Head of caudate nucleus (tissue), 42 donors: ENCODE measurements at regions of chr11 and their contacts with region 1.

Region 1: DNA sequence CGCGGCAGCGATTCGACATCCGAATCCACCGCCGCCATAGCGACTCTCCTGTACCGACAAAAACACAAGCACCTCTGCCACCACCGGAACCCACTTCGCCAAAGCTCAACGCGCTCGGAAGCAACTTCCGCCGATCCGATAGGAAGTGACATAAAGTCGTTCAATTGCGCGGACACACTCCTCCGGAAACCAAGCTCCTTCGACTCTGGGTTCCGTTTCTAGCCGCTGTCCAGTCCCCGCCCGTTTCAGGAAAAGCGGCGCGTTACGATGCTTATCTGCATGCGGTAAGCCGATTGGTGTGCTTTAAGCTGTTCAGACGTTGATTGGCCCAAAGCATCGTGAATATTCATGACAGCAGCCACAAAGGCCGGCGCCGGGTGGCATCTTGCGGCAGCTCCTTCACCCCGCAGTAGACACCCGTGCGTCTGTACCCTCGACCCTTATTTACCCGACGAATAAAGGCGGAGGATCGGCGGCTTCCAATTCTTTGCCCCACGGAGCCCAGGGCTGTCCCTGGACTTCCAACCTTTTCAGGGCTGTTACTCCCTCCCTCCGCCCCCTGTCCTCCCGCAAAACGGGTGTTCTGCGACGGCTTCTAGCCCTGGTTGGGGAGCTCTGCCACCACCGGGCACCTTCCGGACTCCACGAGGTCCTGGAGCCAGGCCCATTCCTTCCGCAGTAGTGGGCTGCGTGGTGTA is at the start of gene TUT1:
- DNase-seq: peak; percentile 90 to 99 (median 97)

Region 2: DNA sequence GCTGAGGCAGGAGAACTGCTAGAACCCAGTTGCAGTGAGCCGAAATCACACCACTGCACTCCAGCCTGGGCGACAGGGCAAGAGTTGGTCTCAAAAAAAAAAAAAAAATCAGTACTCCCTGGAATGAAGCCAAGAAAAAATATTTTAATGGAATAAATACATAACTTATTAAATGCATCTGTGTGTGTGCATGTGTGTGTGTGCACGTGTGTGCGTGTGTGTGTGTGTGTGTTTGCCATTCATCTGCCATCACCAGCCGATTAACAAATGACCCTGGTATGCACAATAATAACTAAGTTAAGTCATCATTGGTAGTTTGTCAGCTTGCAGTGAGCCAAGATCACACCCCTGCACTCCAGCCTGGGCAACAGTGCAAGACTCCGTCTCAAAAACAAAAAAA is 207.8 kb before region 1 on chr11:
- intact Hi-C with region 1: no loop called
- DNase-seq: peak in 1 of 42 donors; percentile 1

Region 3: DNA sequence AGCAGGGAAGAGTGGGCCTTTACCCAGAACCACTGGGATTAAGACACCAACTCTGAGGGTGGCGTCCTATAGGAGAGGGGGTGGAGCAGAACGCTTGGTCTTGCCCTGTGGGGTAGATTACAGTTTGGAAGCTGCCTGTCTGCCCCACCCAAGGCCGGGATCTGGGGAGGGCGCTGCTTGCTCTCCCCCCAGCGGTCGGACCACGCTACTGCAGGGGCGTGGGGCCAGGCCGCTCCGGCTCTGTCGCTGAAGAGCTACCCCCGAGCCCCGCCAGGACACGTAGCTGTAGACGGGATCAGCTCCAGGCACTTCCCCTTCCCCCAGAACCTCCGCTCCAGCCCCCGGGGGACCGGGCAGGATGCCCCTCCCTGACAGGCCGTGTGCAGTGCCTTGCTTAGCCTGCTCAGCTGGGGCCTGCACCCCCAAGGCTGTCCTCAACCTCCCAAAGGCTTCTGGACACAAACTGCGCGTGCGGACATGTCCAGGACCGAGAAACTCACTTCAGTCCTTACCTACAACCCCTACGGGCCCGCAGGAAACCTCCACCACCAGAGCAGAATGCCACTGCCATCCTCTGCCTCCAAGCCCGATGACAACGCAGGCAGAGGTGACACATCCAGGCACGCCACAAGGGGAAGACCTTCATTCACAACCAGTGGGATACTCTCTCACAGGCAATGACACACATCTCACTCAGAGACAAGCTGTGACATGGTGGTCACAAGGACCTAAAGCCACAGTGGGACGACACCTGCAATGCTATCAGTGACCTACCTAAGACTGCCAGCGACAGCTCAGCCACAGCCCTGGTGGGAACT is 48.6 kb before region 1 on chr11:
- intact Hi-C with region 1: no loop called
- DNase-seq: peak in 40 of 42 donors; percentile 33 to 87 (median 68)

Region 4: GRCh38 chr11:62678770-62679696 is 87.4 kb after region 1 on chr11 and contains the start of gene UBXN1:
- intact Hi-C with region 1: loop called (anchors 5 kb)
- DNase-seq: peak; percentile 78 to 97 (median 90)

Region 5: GRCh38 chr11:62831520-62832335 is 240.1 kb after region 1 on chr11 and contains the start of gene STX5:
- intact Hi-C with region 1: loop called (anchors 10 kb)
- DNase-seq: peak; percentile 99 to 100 (median 100)